Activated naive CD8-positive, alpha-beta T cell treated with anti-CD3 and anti-CD28 coated beads, Interleukin-2, amount 10 ng/mL, durations not matched to agents 7 days and 5 days (primary cell): ENCODE measurements at regions of chr2 and their contacts with region 1.

Region 1: DNA sequence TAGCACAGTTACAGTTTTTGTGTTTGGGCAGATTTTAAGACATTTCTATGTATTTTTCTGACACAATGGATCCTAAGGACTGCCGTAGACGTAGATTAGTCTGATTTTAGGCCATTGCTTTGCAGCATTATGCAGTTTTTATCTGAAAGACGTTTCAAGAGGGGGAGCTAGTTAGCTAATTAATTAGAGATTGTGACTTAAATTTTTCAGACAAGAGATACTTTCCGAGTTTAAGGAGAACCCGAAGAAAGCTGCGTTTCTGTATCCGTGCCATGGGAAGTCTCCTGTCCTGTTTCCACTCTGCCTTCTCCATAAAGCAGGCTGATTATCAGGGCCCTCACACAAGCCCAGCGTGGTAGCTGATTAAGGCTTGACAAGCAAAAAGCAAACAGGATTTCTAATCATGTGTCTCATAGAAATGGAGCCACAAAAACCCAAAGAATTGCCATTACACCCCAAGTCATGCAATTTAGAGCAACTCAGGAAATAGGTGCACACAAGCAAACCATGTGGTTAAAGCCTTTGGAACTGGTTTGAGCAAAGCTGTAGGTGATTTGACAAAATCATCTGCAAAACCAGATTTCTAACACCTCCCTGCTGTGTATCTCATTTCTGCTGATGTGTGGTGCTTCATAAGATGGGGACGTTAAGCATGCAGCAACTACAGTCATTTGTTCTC is 808.1 kb downstream of the RNF144A start:
- DNase-seq: no peak
- ATAC-seq: peak; percentile 88
- H3K4me3 Mint-ChIP-seq: peak overlapping the region; percentile 95
- H3K27ac Mint-ChIP-seq: peak overlapping the region; percentile 92
- H3K4me1 Mint-ChIP-seq: peaks cover 40% of the 10 kb centered on the region
- H3K27me3 Mint-ChIP-seq: no peaks in the 10 kb centered on the region

Region 2: GRCh38 chr2:7450188-7450832 is 275.0 kb before region 1 on chr2:
- POLR2A ChIA-PET with region 1: interaction called, 24 read pairs
- DNase-seq: no peak
- ATAC-seq: peak; percentile 45
- H3K4me3 Mint-ChIP-seq: peak overlapping the region; percentile 73
- H3K27ac Mint-ChIP-seq: peak overlapping the region; percentile 92
- H3K4me1 Mint-ChIP-seq: peaks cover 70% of the 10 kb centered on the region
- H3K27me3 Mint-ChIP-seq: no peaks in the 10 kb centered on the region

Region 3: GRCh38 chr2:7672027-7672684 is 53.2 kb before region 1 on chr2:
- POLR2A ChIA-PET with region 1: interaction called, 32 read pairs
- DNase-seq: peak; percentile 74
- ATAC-seq: peak; percentile 86
- H3K4me3 Mint-ChIP-seq: peak overlapping the region; percentile 79
- H3K27ac Mint-ChIP-seq: peak overlapping the region; percentile 95
- H3K4me1 Mint-ChIP-seq: peaks cover 50% of the 10 kb centered on the region
- H3K27me3 Mint-ChIP-seq: no peaks in the 10 kb centered on the region